Activated naive CD4-positive, alpha-beta T cell treated with anti-CD3 and anti-CD28 coated beads for 36 hours (primary cell): ENCODE measurements at regions of chr15 and their contacts with region 1.

Region 1: GRCh38 chr15:98442379-98442833 is 205.9 kb upstream of the IGF1R start:
- DNase-seq: peak; percentile 83
- H3K4me3 Mint-ChIP-seq: no peak overlapping the region
- H3K27ac Mint-ChIP-seq: no peak overlapping the region
- H3K4me1 Mint-ChIP-seq: peaks cover 2% of the 10 kb centered on the region
- H3K27me3 Mint-ChIP-seq: peaks cover 17% of the 10 kb centered on the region

Region 2: GRCh38 chr15:98113327-98113726 is 329.1 kb before region 1 on chr15:
- CTCF ChIA-PET with region 1: no interaction called
- intact Hi-C with region 1: no loop called
- DNase-seq: no peak
- H3K4me3 Mint-ChIP-seq: no peak overlapping the region
- H3K27ac Mint-ChIP-seq: no peak overlapping the region
- H3K4me1 Mint-ChIP-seq: no peaks in the 10 kb centered on the region
- H3K27me3 Mint-ChIP-seq: peaks cover 7% of the 10 kb centered on the region

Region 3: DNA sequence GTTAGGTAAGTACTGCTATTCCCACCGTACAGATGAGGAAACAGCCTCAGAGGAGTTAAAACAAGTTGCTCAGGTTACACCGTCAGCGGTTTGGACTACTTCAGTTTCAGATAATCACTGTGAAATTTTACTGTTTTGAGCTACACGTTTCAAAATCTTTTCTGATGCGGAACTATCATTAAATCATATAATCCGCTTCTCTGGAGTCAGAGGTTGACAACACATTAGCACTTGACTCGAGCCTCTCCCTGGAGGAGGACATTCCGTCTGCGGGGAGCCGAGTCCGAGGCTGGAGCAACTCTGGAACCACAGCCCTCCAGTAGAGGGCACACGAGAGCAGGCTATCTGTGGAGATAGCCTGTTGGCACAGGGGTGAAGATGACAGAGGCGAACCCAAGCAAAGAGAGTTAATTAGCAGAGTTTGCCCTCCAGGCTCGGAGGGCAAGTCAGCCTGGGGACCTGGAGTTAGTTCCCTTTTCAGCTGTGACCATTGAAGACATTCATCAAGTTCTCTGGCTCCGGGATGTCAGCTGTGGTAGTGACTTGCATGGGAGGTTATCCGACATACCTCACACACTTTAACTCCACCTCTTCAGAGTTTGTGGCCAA is 337.2 kb after region 1 on chr15:
- CTCF ChIA-PET with region 1: no interaction called
- intact Hi-C with region 1: loop called (anchors 5 kb)
- DNase-seq: peak; percentile 86
- H3K4me3 Mint-ChIP-seq: peak overlapping the region; percentile 51
- H3K27ac Mint-ChIP-seq: no peak overlapping the region
- H3K4me1 Mint-ChIP-seq: peaks cover 49% of the 10 kb centered on the region
- H3K27me3 Mint-ChIP-seq: no peaks in the 10 kb centered on the region

Region 4: GRCh38 chr15:98881526-98882520 is 439.4 kb after region 1 on chr15:
- CTCF ChIA-PET with region 1: no interaction called
- intact Hi-C with region 1: loop called (anchors 1 kb)
- DNase-seq: peak; percentile 23
- H3K4me3 Mint-ChIP-seq: no peak overlapping the region
- H3K27ac Mint-ChIP-seq: peak overlapping the region; percentile 25
- H3K4me1 Mint-ChIP-seq: peaks cover 14% of the 10 kb centered on the region
- H3K27me3 Mint-ChIP-seq: no peaks in the 10 kb centered on the region

Region 5: GRCh38 chr15:98904544-98904943 is 462.1 kb after region 1 on chr15:
- CTCF ChIA-PET with region 1: no interaction called
- intact Hi-C with region 1: loop called (anchors 1 kb)
- DNase-seq: peak; percentile 36
- H3K4me3 Mint-ChIP-seq: no peak overlapping the region
- H3K27ac Mint-ChIP-seq: no peak overlapping the region
- H3K4me1 Mint-ChIP-seq: peaks cover 14% of the 10 kb centered on the region
- H3K27me3 Mint-ChIP-seq: no peaks in the 10 kb centered on the region

Region 6: DNA sequence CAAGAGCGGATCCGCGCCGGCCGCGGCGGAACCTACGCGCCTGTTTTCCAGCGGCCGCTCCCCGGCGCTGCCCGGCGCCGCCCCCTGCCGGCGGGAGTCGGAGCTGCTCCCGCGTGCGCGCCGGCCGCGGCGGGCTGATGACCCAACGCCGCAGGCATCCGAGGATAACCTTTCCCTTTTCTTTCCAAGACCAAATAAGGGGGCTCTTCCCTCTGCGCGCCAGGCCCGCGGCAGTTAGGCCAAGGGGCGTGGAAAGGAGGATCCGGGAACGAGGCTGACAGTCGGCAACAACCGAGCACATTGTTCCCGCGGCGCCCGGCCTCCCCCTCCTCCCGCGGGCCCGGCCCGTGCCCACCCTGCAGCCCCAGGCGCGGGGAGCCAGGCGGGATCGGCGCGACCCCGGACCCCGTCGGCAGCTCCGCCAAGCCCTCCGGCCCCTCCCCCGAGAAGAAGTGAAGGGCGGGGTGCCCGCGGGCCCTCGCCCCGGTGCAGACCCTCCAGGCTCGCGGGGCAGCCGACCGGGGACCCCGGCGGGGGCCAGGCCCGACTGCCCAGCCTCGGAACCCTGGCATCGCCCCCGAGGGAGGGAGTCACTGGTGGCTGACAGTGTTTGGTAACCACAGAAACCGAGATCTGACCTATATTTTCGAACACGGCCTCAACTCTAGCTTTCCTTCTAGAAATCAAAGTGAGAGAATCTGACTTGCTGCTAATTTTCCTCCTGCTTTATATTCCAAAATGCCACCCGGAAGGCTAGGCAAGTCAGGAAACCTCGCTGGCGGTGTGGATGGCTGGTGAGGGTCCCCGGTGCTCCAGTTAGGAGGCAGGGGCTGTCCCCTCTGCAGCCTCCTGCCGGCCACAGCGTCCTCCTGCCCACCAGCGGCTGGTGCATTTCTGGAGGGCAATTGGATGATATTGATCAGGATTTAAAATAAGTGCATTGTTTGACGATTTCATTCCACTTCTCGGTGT is 616.9 kb after region 1 on chr15:
- CTCF ChIA-PET with region 1: no interaction called
- intact Hi-C with region 1: loop called (anchors 5 kb)
- DNase-seq: peak; percentile 52
- H3K4me3 Mint-ChIP-seq: peak overlapping the region; percentile 70
- H3K27ac Mint-ChIP-seq: no peak overlapping the region
- H3K4me1 Mint-ChIP-seq: peaks cover 6% of the 10 kb centered on the region
- H3K27me3 Mint-ChIP-seq: peaks cover 33% of the 10 kb centered on the region

Region 7: DNA sequence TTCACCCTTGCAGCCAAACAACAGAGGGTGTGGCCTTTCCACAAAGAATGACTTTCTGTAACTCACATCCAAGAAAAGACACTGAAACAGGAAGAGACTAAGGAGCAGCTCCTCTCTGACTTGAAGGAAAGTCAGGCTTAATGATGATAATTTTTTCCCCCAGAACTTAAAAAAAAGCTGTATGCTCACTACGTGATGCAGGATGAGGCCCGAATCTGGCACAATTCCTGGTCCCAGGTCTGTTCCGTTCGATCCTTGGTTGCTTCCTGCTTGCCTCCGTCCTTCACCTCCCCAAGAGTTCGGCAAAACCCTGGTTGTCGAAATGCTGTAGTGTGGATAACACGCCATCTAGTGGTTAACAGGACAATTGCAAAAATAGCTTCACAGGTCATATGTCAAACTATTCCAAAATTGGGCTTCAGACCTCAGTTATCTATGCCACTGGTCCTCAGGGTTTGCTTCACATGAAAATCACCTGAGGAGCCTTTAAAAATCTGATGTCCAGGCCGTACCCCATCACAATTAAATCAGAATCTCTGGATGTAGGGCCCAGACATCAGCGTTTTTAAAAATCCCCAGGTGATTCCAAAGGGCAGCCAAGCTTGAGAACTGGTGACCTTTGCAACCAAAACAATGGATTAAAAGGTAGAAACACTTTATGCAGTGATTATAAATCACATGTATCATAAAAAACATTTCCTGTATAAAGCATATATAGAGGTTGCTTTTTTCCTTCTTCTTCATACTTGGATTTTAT is 634.3 kb after region 1 on chr15:
- CTCF ChIA-PET with region 1: interaction called, 3 read pairs
- intact Hi-C with region 1: loop called (anchors 1 kb)
- DNase-seq: peak; percentile 61
- H3K4me3 Mint-ChIP-seq: peak overlapping the region; percentile 72
- H3K27ac Mint-ChIP-seq: no peak overlapping the region
- H3K4me1 Mint-ChIP-seq: peaks cover 7% of the 10 kb centered on the region
- H3K27me3 Mint-ChIP-seq: peaks cover 9% of the 10 kb centered on the region

Region 8: GRCh38 chr15:99213187-99213811 is 770.9 kb after region 1 on chr15:
- CTCF ChIA-PET with region 1: no interaction called
- intact Hi-C with region 1: loop called (anchors 2 kb)
- DNase-seq: peak; percentile 85
- H3K4me3 Mint-ChIP-seq: no peak overlapping the region
- H3K27ac Mint-ChIP-seq: no peak overlapping the region
- H3K4me1 Mint-ChIP-seq: no peaks in the 10 kb centered on the region
- H3K27me3 Mint-ChIP-seq: peaks cover 5% of the 10 kb centered on the region